ENCODE measurements at regions of chr7 and their contacts with region 1.

Region 1: GRCh38 chr7:101058355-101058754 is 26.9 kb upstream of the TRIM56 start:
- DNase-seq: peak; percentile 54
- CTCF ChIP-seq: no peak

Region 2: DNA sequence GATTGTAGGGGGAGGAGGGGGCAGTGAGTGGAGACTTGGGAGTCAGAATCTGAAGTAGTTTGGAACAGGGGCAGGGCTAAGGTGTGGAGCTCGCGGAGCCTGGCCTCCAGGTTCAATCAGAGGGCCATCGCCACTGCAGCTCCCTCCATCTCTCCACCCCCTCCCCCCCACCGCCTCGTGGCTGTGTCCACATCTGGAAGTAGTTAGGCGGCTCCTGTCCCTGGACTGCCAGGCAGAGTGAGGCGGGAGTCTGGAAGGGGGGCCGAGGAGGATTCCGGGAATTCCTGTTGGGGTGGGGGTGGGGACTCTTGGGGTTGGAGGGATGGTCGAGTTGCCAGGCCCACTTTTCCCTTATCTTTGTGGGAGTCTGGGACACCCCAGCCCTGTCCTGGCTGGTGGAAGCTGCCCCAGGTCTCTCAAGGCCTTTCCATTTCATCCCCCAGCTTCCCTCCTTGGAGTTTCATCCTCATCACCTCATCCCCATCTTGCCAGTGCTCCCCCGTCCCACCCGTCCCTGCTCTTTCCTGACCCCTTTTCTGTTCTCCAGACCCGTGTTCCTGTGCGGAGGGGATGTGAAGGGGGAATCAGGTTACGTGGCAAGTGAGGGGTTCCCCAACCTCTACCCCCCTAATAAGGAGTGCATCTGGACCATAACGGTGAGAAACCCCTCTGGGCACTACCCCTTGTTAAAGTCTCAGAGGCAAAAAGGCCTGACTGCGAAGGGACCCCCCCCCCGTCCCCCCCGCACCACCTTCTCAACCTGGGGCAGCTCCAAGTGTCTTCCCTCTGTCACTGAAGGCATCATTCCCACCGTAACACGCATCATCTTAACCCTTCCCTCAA is 455.3 kb before region 1 on chr7:
- in situ Hi-C with region 1: no loop called
- DNase-seq: no peak
- CTCF ChIP-seq: no peak

Region 3: GRCh38 chr7:100889761-100890634 is 168.4 kb before region 1 on chr7:
- in situ Hi-C with region 1: no loop called
- DNase-seq: peak; percentile 99
- CTCF ChIP-seq: no peak

Region 4: DNA sequence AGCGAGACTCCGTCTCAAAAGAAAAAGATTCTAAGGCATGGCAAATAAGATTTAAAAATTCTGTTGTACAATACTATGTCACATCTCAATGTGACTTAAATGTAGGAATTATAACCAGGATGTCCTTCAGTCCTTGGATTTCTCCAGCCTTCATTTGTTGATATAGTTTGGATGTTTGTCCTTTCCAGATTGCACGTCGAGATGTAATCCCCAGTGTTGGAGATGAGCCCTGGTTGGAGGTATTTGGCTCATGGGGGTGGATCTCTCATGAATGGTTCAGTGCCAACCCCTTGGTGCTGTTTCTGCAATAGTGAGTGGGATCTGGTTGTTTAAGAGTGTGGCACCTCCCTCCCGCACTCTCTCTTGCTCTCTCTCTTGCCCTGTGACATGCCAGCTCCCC is 149.8 kb before region 1 on chr7:
- in situ Hi-C with region 1: loop called (anchors 5 kb)
- DNase-seq: no peak
- CTCF ChIP-seq: no peak

Region 5: DNA sequence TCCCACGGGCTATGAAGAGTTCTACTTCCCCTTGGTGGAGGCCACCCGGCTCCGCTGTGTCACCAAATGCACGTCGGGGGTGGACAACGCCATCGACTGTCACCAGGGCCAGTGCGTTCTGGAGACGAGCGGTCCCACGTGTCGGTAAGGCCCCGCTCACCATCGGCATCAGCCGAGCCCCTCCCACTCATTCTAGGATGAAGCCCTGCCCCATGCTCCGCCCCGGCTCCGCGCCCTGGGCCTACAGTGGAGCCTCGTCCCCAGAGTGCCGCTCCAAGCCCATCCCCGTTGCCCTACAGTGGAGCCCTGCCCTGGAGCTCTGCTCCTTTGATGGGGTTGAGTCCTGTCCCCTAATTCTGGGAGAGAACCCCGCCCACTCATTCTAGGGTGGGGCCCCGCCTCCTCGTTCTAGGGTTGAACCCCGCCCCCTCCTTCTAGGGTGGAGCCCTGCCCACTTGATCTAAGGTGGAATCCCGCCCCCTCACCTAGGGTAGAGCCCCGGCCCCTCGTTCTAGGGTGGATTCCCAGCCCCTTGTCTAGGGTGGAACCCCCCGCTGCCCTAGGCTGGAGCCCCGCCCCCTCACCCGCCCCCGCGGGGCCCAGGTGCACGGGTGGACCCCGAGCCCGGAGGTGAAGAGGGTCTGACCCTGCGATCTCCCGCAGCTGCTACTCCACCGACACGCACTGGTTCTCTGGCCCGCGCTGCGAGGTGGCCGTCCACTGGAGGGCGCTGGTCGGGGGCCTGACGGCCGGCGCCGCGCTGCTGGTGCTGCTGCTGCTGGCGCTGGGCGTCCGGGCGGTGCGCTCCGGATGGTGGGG is 92.4 kb before region 1 on chr7:
- in situ Hi-C with region 1: loop called (anchors 5 kb)
- DNase-seq: peak; percentile 98
- CTCF ChIP-seq: peak; percentile 99

Measured in GM13976 (cell line).